Esophagus squamous epithelium (tissue), 5 donors: ENCODE measurements at regions of chr6 and their contacts with region 1.

Region 1: GRCh38 chr6:29834564-29835436 is 7.2 kb downstream of the HLA-G start:
- DNase-seq: no peak
- H3K4me3 ChIP-seq: no peak overlapping the region
- H3K27ac ChIP-seq: no peak overlapping the region
- H3K4me1 ChIP-seq: no peaks in the 10 kb centered on the region
- H3K27me3 ChIP-seq: peaks cover 0 to 89% (median 0%) of the 10 kb centered on the region in 4 donors
- CTCF ChIP-seq: peak; percentile 46 to 87 (median 70)
- POLR2A ChIP-seq: no peak

Region 2: DNA sequence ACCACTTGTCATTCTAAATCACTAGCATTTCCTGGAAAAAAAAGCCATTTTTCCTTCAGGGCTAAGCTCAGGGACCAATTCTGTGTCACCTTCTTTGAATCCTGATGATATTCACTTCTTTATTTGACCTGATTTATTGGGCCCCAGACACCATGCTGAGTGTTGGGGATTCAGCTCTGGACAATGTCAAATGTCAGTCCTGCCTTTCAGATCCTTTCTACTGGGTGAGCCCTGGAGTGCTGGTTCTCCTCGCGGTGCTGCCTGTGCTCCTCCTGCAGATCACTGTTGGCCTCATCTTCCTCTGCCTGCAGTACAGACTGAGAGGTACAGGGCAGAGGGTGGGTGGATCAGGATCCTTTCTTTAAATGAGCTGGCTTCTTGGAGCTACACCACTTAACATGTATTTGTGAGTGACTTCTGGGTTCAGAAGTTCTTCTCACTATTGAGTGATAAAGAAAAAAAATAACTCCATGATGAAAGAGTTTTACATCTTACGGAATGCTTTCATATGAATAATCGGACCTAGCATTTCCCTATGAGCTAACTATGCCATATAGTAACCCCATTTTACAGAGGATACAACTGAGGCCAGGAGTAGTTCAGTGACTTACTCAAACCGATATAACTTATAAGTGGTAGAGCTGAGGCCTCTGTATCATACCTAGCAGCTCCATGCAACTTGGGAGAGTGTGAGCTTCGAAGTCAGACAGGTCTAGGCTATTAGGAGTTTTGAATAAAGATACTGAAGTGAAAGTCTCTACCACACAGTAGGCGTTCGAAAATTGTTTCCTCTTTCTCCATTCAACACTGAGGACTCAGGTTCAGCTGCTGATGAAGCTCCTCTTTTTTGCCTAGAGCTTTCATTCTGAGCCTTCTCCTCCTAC is 168.6 kb before region 1 on chr6:
- intact Hi-C with region 1: no loop called
- DNase-seq: no peak
- H3K4me3 ChIP-seq: no peak overlapping the region
- H3K27ac ChIP-seq: no peak overlapping the region
- H3K4me1 ChIP-seq: peaks cover 0 to 4% (median 0%) of the 10 kb centered on the region in 3 donors
- H3K27me3 ChIP-seq: peaks cover 0 to 48% (median 0%) of the 10 kb centered on the region in 4 donors
- CTCF ChIP-seq: no peak
- POLR2A ChIP-seq: no peak

Region 3: DNA sequence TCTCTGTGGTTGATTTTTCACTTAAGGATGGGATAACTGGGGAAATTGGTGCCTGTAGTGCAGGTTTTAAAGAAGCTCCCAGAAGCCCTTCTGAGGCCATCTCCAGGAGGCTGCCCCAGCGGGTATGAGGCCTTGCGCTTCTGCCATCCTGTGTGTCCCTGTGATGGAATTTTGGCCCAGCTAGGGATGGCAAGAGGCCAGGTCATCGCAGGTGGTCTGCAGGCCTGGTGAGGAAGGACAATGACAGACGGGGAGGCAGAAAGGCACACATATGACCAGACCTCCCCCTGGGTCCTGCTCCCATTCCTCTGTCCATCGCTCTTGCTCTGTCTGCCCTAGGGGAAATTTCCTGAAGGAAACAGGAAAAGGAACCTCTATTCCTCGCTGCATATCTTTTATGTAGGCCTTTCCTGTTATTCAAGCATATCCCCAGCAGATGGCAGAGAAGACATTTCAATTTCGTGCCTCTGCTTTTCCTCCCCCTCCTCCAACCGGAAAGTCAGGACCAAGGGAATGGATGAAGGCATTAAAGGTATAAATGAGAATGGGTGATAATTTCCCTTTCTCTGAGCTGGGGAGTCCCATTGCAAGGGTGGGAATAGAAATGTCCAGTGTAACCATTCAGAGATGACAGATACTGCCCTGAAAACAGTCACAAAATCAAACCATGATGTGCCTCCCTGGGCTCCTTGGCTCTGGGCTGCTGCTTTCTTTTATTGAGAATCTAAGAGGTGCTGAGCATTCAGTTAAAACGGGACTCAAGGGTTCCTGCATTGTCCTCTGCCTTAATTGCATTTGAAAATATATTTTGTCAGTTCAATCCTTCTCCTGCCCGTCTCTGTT is 129.2 kb before region 1 on chr6:
- intact Hi-C with region 1: loop called (anchors 10 kb)
- DNase-seq: no peak
- H3K4me3 ChIP-seq: no peak overlapping the region
- H3K27ac ChIP-seq: no peak overlapping the region
- H3K4me1 ChIP-seq: no peaks in the 10 kb centered on the region
- H3K27me3 ChIP-seq: peaks cover 0 to 76% (median 0%) of the 10 kb centered on the region in 4 donors
- CTCF ChIP-seq: peak; percentile 30 to 70 (median 60)
- POLR2A ChIP-seq: no peak

Region 4: GRCh38 chr6:29748391-29749307 is 86.2 kb before region 1 on chr6:
- intact Hi-C with region 1: loop called (anchors 10 kb)
- DNase-seq: no peak
- H3K4me3 ChIP-seq: peak overlapping the region; percentile 43 to 81 (median 72)
- H3K27ac ChIP-seq: peak overlapping the region; percentile 22 to 82 (median 74)
- H3K4me1 ChIP-seq: peaks cover 11 to 52% (median 21%) of the 10 kb centered on the region in 3 donors
- H3K27me3 ChIP-seq: no peaks in the 10 kb centered on the region
- CTCF ChIP-seq: no peak
- POLR2A ChIP-seq: peak in 1 of 4 donors; percentile 71